Dendritic cell treated with granulocyte-macrophage colony-stimulating factor and Interleukin-4, amounts not matched to agents 40 ng/mL and 50 ng/mL, for 4 days (primary cell): ENCODE measurements at regions of chr9 and their contacts with region 1.

Region 1: GRCh38 chr9:76756268-76756640 is 8.0 kb upstream of the PCA3 start:
- H3K4me3 Mint-ChIP-seq: no peak overlapping the region
- H3K27ac Mint-ChIP-seq: no peak overlapping the region
- H3K4me1 Mint-ChIP-seq: peaks cover 15% of the 10 kb centered on the region
- H3K27me3 Mint-ChIP-seq: peaks cover 5% of the 10 kb centered on the region

Region 2: DNA sequence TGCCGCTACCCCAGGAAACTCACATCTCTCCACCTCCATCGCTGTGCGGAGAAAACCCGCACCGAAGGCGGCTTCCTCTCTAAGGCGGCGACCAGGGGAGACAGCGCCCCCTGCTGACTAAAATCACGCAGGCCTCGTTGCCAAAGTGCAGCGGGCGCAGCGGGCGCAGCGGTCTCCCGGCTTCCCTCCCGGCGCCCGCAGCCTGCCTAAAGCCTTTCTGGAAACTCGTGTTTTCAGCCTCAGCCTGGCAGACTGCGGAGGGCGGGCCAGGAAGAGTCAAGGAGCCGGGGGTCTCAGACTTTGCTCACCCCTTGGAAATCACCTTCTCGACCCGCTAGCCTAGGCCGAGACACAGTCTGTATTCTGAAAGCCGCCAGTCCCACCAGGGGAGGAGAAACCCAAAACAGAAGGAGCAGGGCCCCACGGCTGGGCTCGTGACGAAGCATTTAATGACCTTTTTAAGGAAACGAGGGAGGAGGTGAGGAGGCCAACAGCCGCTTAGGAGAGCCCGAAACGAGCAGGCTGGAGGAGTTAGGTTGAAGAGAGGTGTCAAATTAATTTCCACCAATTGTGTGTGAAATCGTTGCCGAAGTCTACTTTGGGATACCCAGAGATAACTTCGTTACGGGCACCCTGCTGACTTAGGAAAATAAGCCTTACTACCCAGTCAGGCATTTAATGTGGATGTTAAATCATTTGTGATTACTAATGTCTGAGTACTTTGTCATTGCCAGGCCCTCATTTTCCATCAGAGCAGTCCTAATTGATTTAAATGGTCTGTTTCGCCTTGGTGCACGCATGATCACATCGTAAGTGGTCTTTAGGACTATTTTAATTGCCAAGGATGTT is 255.9 kb after region 1 on chr9:
- intact Hi-C with region 1: loop called (anchors 5 kb)
- H3K4me3 Mint-ChIP-seq: peak overlapping the region; percentile 58
- H3K27ac Mint-ChIP-seq: no peak overlapping the region
- H3K4me1 Mint-ChIP-seq: peaks cover 7% of the 10 kb centered on the region
- H3K27me3 Mint-ChIP-seq: peaks cover 83% of the 10 kb centered on the region

Region 3: DNA sequence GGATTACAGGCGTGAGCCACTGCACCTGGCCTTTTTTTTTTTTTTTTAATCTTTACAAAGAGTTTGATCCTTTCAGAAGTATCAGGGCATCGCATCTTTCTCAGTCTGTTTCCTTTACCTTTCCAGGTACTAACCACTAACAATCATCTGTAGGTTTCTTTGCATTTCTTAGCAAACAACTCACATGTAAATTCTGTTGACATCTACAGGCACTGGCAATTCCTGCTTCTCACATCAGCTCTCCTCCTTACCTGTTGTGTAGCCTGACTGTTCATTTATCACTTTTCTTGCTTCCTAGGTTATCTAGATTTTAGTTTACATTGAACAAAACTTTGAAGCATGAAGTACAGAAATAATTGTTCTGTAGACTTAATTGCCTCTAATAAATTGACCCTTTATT is 393.6 kb after region 1 on chr9:
- intact Hi-C with region 1: loop called (anchors 1 kb)
- H3K4me3 Mint-ChIP-seq: no peak overlapping the region
- H3K27ac Mint-ChIP-seq: no peak overlapping the region
- H3K4me1 Mint-ChIP-seq: no peaks in the 10 kb centered on the region
- H3K27me3 Mint-ChIP-seq: peaks cover 5% of the 10 kb centered on the region